ENCODE measurements at regions of chr1 and their contacts with region 1.

Region 1: GRCh38 chr1:204556458-204557052 is 40.3 kb downstream of the MDM4 start:
- DNase-seq: peak in 3 of 10 donors; percentile 41 to 67 (median 61)
- ATAC-seq: peak; percentile 86 to 88
- H3K4me3 Mint-ChIP-seq: peak overlapping the region in 9 of 10 donors; percentile 34 to 72 (median 54)
- H3K27ac Mint-ChIP-seq: peak overlapping the region; percentile 63 to 94 (median 89)
- H3K4me1 Mint-ChIP-seq: peaks cover 19 to 54% (median 45%) of the 10 kb centered on the region in 4 donors
- H3K27me3 Mint-ChIP-seq: no peaks in the 10 kb centered on the region

Region 2: DNA sequence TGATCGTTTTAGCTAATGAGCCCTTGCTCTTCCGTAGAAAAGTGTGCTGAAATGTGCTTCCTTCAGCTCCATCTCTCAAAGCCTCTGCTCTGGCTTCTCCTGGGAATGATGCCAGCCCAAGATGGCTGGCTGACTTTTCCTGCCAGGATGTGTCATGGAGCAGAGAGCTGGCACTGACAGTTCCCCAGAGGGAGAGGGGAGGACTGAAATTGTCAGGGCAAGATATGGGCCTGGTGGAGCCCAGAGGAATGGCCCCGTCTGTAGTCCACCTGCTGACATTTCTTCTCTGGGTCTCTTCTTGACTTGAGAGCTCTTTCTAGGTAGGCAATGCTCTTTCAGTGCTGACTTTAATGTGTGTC is 171.6 kb before region 1 on chr1:
- POLR2A ChIA-PET with region 1: no interaction called
- DNase-seq: no peak
- ATAC-seq: no peak
- H3K4me3 Mint-ChIP-seq: no peak overlapping the region
- H3K27ac Mint-ChIP-seq: no peak overlapping the region
- H3K4me1 Mint-ChIP-seq: peaks cover 2 to 7% (median 4%) of the 10 kb centered on the region in 4 donors
- H3K27me3 Mint-ChIP-seq: no peaks in the 10 kb centered on the region

Region 3: DNA sequence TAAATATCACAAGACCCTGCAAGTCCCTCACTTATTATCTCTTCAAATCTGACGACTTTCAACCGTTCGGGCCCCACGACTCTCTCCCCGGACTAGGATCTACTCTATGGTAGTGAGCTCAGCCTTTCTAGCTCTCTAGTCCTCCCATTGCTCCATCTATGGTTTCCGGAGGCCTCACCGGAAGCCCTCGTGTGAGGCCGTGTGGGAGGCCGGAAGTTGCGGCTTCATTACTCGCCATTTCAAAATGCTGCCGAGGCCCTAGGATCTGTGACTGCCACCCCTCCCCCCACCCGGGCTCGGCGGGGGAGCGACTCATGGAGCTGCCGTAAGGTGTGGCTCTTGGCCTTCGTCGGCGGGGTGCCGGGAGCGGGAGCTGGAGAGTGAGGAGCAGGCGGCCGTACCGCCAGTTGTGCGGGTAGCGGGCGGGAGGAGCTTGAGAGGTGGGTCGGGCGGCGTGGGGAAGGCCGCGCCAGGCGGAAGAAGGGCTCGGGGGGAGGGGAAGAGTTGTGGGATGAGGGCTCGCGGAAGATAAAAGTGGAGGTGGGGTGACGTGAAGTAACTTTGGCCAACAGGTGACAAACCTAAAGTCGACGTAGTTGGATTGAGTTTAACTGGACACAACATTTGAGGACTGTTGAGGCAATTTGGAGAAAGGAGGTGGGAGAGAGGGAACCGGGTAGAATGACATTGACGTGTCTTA is 40.2 kb before region 1 on chr1 and contains the start of gene MDM4:
- POLR2A ChIA-PET with region 1: interaction called, 11 read pairs
- DNase-seq: peak; percentile 75 to 96 (median 92)
- ATAC-seq: peak; percentile 71 to 78
- H3K4me3 Mint-ChIP-seq: no peak within 1 kb of the TSS
- H3K27ac Mint-ChIP-seq: peak within 1 kb of the TSS in 4 of 10 donors; percentile 21 to 99 (median 76)
- H3K4me1 Mint-ChIP-seq: peaks cover 19 to 74% (median 62%) of the 10 kb centered on the region in 4 donors
- H3K27me3 Mint-ChIP-seq: no peaks in the 10 kb centered on the region
- polyA plus RNA-seq, gene MDM4: 10.0 to 23.1 (median 10.7) TPM

Region 4: DNA sequence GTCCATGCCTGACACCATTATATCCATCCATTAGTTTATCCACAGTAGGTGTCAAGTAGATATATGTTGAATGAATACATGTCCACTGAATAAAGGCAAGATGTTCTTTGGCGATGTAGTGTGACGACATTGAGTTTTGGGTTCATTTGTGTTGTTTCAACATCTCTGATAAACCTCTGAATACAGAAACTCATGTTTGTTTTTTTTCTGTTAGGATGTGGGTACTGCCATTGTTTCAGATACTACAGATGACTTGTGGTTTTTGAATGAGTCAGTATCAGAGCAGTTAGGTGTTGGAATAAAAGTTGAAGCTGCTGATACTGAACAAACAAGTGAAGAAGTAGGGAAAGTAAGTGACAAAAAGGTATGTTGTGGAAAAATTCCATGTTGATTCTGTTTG is 12.2 kb before region 1 on chr1:
- POLR2A ChIA-PET with region 1: interaction called, 17 read pairs
- DNase-seq: peak in 4 of 10 donors; percentile 16 to 69 (median 60)
- ATAC-seq: peak; percentile 93 to 97
- H3K4me3 Mint-ChIP-seq: peak overlapping the region in 9 of 10 donors; percentile 31 to 76 (median 63)
- H3K27ac Mint-ChIP-seq: peak overlapping the region; percentile 35 to 92 (median 82)
- H3K4me1 Mint-ChIP-seq: peaks cover 24 to 56% (median 55%) of the 10 kb centered on the region in 4 donors
- H3K27me3 Mint-ChIP-seq: no peaks in the 10 kb centered on the region